ENCODE measurements at regions of chr7 and their contacts with region 1.

Region 1: DNA sequence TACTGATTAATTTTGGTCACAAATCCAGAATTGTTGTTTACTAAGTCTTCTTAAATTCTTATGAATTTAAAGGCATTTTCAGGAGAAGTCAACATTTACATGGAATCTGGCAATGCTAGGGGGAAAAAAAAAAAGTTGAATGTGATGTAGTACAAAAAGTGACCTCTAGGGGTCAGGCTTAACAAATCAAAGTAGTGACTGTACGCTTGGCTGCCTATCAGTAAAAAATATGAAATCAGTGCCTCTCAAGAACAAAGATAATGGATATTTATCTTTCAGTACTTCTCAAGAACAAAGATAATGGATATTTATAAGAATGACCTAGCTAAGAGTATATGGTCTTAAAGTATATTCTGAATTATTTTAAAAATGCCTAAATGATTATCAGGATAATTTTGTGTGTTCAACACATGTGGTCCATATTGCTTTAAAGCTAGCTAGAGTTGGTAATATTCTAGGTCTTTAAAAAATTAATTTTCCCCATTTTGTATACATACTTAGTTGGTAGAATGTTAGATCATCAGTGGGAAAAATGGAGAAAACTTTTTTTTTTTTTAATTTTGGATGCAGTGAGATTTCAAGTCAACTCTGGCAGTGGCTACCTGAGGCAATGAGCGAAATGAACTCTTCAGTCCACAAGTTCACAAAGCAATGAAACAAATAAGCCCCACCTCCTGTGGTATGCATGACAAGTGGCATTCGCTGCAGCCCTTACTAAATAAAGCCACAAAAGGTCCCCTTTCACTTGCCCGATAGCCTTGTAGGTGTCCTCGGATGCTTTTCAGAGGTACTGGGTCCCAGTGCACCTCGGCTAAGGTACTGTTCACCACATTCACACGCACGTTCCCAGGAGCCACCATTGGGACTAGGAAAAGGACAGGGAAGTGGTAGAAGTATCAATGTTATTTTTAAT is 51.2 kb upstream of the LAMB4 start:
- DNase-seq: no peak
- ATAC-seq: peak; percentile 60

Region 2: DNA sequence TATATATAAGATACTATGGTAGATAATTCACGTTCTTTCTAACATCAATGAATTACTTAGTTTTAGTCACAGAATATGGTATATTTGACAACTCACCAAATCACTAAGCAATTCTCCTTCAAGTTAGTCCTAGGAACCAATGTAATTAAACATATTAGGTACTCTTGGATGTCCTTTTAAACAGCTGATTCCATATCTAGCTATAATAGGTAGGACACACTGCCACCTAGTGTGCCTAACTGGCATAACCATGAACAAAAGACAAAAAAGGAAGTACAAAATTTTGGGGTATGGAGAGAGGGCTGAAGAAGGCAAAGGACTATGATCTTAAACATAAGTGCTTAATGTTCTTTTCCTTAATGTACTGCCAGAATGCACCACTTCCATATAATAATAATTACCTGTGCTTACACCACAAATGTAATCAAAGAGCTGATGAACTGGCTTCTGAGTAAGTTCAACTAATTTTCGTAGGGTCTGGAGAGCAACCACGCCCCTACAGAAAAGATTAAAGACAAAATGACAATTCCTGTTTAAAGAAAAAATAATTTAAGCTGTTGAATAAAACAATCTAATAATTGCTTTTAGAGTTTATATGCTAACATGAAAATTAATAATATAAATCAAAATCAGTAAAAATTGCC is 315.9 kb after region 1 on chr7:
- intact Hi-C with region 1: loop called (anchors 10 kb)
- DNase-seq: no peak
- ATAC-seq: peak; percentile 50